Activated naive CD4-positive, alpha-beta T cell treated with anti-CD3 and anti-CD28 coated beads, Interleukin-2, amount 10 ng/mL, durations not matched to agents 7 days and 5 days (primary cell): ENCODE measurements at regions of chr20 and their contacts with region 1.

Region 1: DNA sequence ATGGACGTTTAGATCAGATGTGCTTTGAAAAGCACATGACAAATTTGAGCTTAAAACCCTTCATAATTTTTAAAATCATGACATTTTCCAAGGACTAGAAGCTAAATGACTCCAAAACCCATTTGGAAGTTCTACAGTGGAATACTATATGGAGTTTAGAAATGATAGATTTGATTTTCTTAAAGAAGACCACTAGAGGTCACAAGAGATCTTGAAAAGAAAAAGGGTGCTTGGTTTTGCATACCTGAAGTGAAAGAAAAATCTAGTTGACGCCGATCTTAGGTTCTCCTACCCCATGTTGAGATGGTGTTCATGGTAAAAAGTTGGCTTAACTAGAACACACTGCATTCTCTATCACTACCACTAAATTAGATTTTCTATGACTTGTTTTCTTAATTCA is 31.5 kb downstream of the CFAP61 start:
- DNase-seq: no peak
- H3K4me3 Mint-ChIP-seq: no peak overlapping the region
- H3K27ac Mint-ChIP-seq: no peak overlapping the region
- H3K4me1 Mint-ChIP-seq: no peaks in the 10 kb centered on the region
- H3K27me3 Mint-ChIP-seq: peaks cover 9% of the 10 kb centered on the region

Region 2: DNA sequence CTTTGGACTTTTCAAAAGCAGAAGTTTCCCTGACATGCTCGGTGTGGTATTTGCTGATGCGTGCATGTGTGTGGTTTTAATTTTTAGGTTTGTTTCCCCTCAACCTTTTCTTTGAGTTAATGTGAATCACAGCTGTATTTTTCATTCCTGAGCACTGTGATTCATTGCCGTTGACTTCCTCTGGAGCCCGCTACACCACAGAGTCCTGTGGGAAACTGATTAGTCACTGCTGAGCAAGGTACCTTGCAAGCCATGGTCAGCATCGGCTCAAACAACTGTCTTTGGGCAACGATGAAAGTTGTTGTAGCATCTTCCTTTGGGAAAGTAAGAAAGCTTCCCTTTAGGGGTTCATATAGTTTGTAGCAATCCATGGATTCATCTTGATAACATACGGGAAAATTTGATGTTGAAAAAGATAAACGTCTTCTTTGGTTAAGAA is 268.2 kb before region 1 on chr20:
- CTCF ChIA-PET with region 1: no interaction called
- DNase-seq: no peak
- H3K4me3 Mint-ChIP-seq: no peak overlapping the region
- H3K27ac Mint-ChIP-seq: no peak overlapping the region
- H3K4me1 Mint-ChIP-seq: no peaks in the 10 kb centered on the region
- H3K27me3 Mint-ChIP-seq: no peaks in the 10 kb centered on the region

Region 3: DNA sequence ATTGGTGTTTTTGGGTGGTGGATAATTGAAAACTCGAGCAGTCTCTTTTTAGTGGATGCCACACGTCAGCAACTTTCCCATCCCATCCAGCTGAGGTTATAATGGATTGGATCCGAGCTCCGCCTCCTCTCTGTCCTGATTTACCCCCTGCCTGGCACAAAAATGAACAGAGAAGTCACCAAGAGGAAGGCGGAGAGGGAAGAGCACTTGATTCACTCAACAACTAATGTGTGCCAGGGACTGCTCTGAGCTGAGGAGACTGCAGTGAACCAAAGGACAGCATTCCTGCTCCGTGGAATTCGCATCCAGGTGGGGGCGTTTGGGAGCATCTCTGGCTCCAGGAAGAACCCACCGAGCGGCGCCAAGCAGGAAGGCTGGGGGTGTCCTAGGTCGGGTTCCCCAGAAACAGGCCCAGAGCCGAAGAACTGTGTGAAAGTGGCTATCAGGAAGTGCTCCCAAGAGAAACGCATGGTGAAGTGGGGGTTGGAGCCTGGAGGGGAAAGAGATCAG is 162.5 kb before region 1 on chr20:
- CTCF ChIA-PET with region 1: no interaction called
- DNase-seq: no peak
- H3K4me3 Mint-ChIP-seq: no peak overlapping the region
- H3K27ac Mint-ChIP-seq: no peak overlapping the region
- H3K4me1 Mint-ChIP-seq: no peaks in the 10 kb centered on the region
- H3K27me3 Mint-ChIP-seq: no peaks in the 10 kb centered on the region

Region 4: DNA sequence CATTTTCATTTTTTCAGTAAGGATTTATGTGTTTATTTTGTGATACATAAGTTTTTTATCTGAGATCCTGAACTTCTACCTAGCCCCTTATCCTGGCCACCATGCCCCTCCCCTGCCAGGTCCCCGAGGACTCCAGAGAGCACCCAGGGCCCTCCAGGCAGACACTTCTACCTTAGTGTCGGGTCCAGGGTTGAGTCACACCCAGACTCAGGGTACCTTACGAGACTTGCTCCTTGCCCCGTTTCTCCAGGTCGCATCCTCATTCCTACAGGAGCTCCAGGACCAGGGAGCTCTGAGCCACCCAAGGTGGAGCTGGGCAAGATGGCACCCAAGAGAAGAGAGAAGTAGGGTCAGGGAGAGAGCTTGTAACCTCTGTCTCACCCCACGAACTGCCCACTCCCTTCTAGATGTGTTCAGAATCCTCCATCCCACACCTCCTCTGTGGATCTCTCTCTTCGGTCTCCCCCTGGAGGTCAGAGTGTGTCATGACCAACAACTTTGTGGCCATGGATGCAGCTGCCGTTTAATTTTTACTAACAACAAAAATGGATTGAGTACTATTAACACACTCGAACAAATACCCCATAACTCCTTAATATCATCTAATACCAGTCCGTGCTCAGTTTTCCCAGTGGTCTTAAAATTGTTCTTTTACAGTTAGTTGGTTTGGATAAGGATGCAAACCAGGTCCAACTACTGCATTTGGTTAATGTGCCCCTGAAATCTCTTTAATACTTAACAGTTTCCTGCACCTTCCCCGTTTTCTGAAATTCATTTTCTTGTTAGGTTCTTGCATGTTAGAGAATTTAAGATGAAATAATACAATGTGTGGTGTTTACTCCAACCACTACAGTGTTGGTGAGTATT is 153.5 kb after region 1 on chr20:
- CTCF ChIA-PET with region 1: interaction called, 10 read pairs
- DNase-seq: peak; percentile 47
- H3K4me3 Mint-ChIP-seq: no peak overlapping the region
- H3K27ac Mint-ChIP-seq: no peak overlapping the region
- H3K4me1 Mint-ChIP-seq: no peaks in the 10 kb centered on the region
- H3K27me3 Mint-ChIP-seq: peaks cover 19% of the 10 kb centered on the region